Prostate gland (tissue), 2 donors: ENCODE measurements at regions of chr7 and their contacts with region 1.

Region 1: GRCh38 chr7:128343554-128344430 is at the start of gene RBM28:
- DNase-seq: peak; percentile 72
- H3K4me3 ChIP-seq: peak within 1 kb of the TSS; percentile 61 to 75
- H3K27ac ChIP-seq: peak within 1 kb of the TSS; percentile 76 to 79
- H3K4me1 ChIP-seq: peaks cover 6% of the 10 kb centered on the region
- H3K27me3 ChIP-seq: no peaks in the 10 kb centered on the region
- CTCF ChIP-seq: no peak
- POLR2A ChIP-seq: no peak
- total RNA-seq, gene RBM28: 13.8 to 29.7 TPM

Region 2: GRCh38 chr7:127392566-127393367 is 951.0 kb before region 1 on chr7 and contains the start of gene ZNF800:
- intact Hi-C with region 1: loop called (anchors 5 kb)
- DNase-seq: peak; percentile 90
- H3K4me3 ChIP-seq: peak within 1 kb of the TSS; percentile 97
- H3K27ac ChIP-seq: peak within 1 kb of the TSS; percentile 96
- H3K4me1 ChIP-seq: no peaks in the 10 kb centered on the region
- H3K27me3 ChIP-seq: no peaks in the 10 kb centered on the region
- CTCF ChIP-seq: no peak
- POLR2A ChIP-seq: peak; percentile 91
- total RNA-seq, gene ZNF800: 29.8 to 33.9 TPM

Region 3: DNA sequence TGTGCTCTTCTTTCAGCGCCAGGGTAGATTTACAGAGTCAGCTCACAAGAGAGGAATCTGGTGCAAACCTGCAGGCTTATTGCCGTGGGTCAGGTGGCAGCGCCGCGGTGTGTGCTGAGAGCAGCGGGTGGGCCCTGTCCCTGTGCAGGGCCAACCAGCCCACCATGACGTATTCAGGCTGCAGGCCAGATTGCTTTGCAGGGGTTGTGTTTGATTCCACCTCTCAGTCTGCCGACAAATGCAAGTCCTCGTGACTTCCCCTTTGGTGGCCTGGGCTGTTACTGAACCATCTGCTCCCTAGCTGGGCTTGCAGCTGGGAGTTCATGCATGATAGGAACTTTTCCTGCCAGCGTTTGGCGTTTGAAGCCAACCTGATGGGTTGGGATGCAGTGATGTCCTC is 169.4 kb before region 1 on chr7:
- intact Hi-C with region 1: no loop called
- DNase-seq: no peak
- H3K4me3 ChIP-seq: no peak overlapping the region
- H3K27ac ChIP-seq: no peak overlapping the region
- H3K4me1 ChIP-seq: no peaks in the 10 kb centered on the region
- H3K27me3 ChIP-seq: no peaks in the 10 kb centered on the region
- CTCF ChIP-seq: no peak
- POLR2A ChIP-seq: no peak

Region 4: DNA sequence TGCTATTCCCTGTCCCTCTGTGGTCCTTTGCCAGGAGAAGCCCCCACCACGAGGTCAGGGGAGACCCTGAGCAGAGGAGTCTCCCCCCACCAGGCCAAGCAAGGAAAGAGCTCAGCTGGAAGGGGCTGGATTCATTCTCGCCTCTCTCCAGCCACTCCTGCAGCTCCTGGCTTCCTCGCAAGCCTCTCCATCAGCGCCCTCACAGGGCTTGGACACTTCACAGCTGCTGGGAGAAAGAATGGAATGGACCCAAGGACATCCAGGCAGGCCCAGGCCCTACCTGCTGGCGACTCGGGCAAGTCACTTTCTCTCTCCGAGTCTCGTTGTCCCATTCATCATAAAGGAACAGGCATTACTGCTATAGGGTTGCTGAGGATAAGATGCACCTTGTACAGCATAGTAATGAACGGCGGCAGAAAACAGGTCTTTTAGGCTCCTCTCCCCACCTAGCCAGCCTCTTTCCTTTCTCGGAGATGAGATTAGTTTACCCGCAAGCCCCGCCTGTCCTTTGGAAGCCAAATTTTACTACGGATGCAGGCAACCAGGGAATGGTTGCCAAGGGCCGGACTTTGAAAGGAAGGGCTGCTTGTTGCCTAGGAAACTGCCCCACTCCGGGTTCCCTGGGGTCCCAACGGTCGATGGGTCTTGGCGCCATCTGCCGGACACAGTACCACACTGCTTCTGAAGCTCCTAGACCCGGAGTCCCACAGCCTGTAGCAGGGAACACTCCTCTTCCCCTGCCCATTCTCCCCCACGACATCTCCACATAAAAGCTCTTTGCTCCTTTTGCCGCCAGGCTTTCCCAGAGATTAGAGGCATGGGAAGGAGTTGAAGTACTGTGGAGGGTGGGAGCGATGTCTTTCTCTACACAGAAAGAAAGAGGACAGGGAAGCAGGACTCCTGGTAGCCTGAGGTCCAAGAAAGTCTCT is 43.7 kb after region 1 on chr7:
- intact Hi-C with region 1: loop called (anchors 2 kb)
- DNase-seq: peak; percentile 44
- H3K4me3 ChIP-seq: no peak overlapping the region
- H3K27ac ChIP-seq: no peak overlapping the region
- H3K4me1 ChIP-seq: no peaks in the 10 kb centered on the region
- H3K27me3 ChIP-seq: no peaks in the 10 kb centered on the region
- CTCF ChIP-seq: peak; percentile 62 to 77 (median 64)
- POLR2A ChIP-seq: no peak